ENCODE measurements at regions of chr13 and their contacts with region 1.

Region 1: GRCh38 chr13:23579072-23579895 is 9.1 kb downstream of the TNFRSF19 start:
- DNase-seq: peak; percentile 78 to 88
- ATAC-seq: peak; percentile 93
- H3K4me3 ChIP-seq: peak overlapping the region; percentile 68 to 97 (median 84)
- H3K27ac ChIP-seq: peak overlapping the region; percentile 84 to 92 (median 86)
- H3K4me1 ChIP-seq: peaks cover 0 to 8% of the 10 kb centered on the region in 2 donors
- H3K27me3 ChIP-seq: no peaks in the 10 kb centered on the region
- CTCF ChIP-seq: no peak
- POLR2A ChIP-seq: peak; percentile 68 to 75

Region 2: DNA sequence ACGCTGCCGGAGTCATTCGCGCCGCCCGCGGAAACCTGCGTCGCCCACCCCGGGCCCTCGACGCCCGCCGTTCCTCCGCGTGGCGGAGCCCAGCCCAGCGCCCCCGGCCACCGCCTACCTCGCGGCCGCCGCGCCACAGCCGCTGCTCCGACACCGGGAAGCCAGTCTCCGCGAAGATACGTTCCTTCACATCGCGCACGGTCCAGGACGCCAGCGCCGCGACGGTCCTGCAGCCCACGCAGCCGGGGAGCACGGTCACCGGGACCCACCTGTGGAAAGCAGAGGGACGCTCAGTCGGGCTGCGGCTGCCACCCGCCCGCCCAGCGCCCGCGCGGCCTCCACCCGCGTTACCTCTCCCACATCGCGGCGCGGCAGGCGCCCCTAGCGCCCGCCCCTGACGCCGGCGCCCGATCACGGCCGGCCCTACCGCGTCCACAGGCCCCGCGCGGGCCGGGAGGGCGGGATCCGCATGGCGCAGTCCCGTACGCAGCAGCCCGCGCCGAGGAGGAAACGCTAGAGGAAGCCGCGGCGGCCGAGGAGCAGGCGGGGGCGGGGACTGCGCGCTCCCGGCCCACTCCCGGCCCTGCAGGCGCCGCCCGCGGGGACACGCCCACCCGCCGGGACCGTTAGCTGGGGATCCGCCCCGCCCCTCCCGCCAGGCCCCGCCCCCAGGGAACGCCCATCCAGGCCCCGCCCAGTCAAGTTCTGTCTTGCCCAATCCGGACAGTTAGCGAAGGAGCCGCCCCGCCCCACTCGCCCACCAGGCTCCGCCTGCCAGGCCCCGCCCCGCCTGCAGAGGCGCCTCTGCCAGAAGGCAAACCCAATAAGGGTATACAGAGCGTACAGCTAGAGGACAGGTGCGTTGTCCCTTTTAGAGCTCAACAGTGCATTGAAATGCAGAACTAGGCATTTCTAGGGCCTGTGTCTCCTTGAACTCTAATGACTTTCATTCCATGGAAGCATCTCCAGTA is 204.0 kb before region 1 on chr13:
- in situ Hi-C with region 1: loop called in 1 of 4 experiments (anchors 10 kb)
- intact Hi-C with region 1: loop called (anchors 10 kb)
- DNase-seq: peak; percentile 95 to 98
- ATAC-seq: peak; percentile 91 to 92
- H3K4me3 ChIP-seq: peak overlapping the region; percentile 64 to 92 (median 75)
- H3K27ac ChIP-seq: peak overlapping the region; percentile 77 to 93 (median 86)
- H3K4me1 ChIP-seq: peaks cover 43 to 57% of the 10 kb centered on the region in 2 donors
- H3K27me3 ChIP-seq: no peaks in the 10 kb centered on the region
- CTCF ChIP-seq: peak in 4 of 5 experiments; percentile 18 to 48 (median 45)
- POLR2A ChIP-seq: peak; percentile 79 to 82

Region 3: DNA sequence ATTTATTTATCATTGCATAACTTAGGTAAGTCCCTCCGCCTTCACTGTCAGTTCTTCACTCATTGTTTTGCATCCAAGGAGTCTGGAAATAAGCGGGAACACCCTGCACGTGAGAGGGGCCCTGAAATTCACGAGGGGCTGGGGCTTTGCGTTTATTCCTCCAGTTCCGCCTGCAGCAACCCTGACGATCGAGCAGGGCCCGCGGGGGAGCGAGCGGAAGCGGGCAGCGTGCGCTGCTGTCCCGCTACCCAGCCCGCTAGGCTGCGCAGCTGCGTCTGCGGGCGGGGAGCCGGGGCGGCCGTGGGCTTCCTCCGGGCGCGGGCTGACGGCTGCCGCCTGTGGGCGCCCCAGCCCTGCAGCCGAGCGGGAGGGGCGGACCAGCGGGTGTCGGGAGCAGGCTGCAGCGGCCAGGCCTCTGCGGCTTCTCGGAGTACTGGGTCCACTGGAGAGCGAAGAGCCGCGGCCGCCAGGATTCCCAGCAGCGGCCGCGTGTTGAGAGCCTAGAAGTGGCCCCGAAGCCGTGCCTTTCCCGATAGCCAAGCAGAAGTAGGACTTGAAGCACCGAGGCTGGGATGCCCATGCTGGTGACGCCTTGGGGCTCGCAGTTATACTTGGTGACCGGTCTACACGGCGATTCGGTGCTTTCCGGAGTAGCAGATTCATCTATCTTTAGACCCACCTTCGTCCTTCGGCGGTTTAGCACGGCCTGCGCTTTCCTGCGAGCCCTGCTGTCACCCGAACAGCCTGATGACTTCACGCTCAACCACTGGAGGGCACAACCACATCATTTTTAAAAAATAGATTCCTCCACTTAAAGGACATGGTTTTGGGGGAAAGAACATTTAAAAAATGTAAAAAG is 112.9 kb before region 1 on chr13:
- in situ Hi-C with region 1: loop called in 2 of 4 experiments (anchors 5 to 10 kb)
- intact Hi-C with region 1: no loop called
- DNase-seq: peak; percentile 33 to 72
- ATAC-seq: peak; percentile 93 to 94
- H3K4me3 ChIP-seq: peak overlapping the region; percentile 70 to 87 (median 70)
- H3K27ac ChIP-seq: peak overlapping the region; percentile 83 to 90 (median 88)
- H3K4me1 ChIP-seq: peaks cover 13 to 15% of the 10 kb centered on the region in 2 donors
- H3K27me3 ChIP-seq: no peaks in the 10 kb centered on the region
- CTCF ChIP-seq: peak; percentile 63 to 72 (median 67)
- POLR2A ChIP-seq: no peak

Region 4: DNA sequence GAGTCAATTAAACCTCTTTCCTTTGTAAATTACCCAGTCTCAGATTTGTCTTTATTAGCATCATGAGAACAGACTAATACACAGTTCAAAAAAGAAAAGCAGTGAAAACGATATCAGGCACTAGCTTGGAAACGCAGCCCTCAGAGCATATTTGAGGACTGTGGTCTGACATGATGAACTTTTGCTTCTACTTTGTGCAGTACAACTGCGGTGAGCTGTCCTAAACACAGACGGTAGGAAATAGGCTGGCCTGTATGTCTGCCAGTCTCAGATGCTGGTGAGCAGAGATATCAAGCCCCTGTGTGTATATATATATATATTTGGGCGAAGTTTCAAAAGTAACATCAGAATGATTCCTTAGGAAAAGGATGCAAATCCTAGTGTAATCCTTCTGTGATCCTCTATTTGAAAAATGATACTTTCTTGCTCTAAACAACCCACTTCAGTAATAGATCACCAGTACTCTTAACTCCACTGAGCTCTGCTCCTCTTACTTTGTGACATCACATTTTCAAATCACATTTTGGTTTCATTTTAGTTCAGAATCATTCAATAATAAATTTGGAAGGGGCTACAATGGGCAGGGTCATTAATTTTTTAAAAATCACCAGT is 65.3 kb after region 1 on chr13:
- in situ Hi-C with region 1: no loop called
- intact Hi-C with region 1: no loop called
- DNase-seq: no peak
- ATAC-seq: peak in 1 of 2 donors; percentile 55
- H3K4me3 ChIP-seq: no peak overlapping the region
- H3K27ac ChIP-seq: no peak overlapping the region
- H3K4me1 ChIP-seq: no peaks in the 10 kb centered on the region
- H3K27me3 ChIP-seq: no peaks in the 10 kb centered on the region
- CTCF ChIP-seq: no peak
- POLR2A ChIP-seq: no peak

Region 5: GRCh38 chr13:23871616-23872220 is 292.4 kb after region 1 on chr13:
- in situ Hi-C with region 1: loop called in 3 of 4 experiments (anchors 10 to 25 kb)
- intact Hi-C with region 1: loop called (anchors 5 kb)
- DNase-seq: no peak
- ATAC-seq: peak; percentile 52 to 73
- H3K4me3 ChIP-seq: no peak overlapping the region
- H3K27ac ChIP-seq: no peak overlapping the region
- H3K4me1 ChIP-seq: peaks cover 0 to 9% of the 10 kb centered on the region in 2 donors
- H3K27me3 ChIP-seq: no peaks in the 10 kb centered on the region
- CTCF ChIP-seq: peak; percentile 49 to 73 (median 60)
- POLR2A ChIP-seq: no peak

Region 6: GRCh38 chr13:24039621-24040475 is 460.6 kb after region 1 on chr13:
- in situ Hi-C with region 1: no loop called
- intact Hi-C with region 1: loop called (anchors 5 kb)
- DNase-seq: no peak
- ATAC-seq: no peak
- H3K4me3 ChIP-seq: no peak overlapping the region
- H3K27ac ChIP-seq: no peak overlapping the region
- H3K4me1 ChIP-seq: peaks cover 0 to 7% of the 10 kb centered on the region in 2 donors
- H3K27me3 ChIP-seq: no peaks in the 10 kb centered on the region
- CTCF ChIP-seq: no peak
- POLR2A ChIP-seq: no peak

Measured in gastrocnemius medialis (tissue), 4 donors.